ENCODE measurements at regions of chr2 and their contacts with region 1.

Region 1: DNA sequence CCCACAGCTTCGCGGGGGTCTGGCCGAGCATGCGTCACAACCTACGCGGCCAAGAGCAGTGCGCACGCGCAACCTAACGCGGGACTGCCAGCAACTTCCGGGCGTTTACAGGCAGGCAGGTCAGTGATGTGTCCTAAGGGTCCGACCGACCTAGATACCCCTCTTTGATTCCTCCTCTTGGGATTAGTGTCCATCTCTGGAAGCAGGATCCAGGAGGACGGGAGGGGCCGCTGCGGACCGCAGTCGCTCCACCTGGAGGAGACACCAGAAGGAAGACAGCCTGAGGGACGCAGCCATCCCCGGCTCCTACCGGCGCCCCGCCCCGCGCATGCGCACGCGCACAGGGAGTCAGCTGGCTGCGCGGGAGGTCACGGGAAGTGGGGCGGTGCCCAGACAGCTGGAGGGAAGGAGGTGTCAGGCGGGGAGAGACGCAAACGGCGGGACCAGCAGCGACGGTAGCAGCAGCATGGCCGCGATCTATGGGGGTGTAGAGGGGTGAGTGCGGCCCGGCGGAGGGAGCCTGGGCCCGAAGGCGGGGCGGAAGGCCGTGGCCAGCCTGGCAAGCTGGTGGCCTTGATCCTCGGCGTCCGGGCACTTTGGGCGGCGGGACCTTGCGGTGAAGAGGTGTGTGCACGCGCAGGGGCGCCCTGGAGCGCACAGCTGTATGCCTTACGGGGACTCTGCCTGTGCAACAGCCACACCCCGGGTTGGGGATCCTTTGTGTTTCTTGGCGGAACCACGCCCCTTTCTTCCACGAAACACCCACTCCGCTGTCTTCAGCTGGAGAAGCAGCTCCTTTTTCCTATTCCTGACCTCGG is at the start of gene NAGK:
- DNase-seq: peak; percentile 92 to 99 (median 95)
- H3K4me3 ChIP-seq: peak within 1 kb of the TSS; percentile 55 to 100 (median 98)
- H3K27ac ChIP-seq: peak within 1 kb of the TSS; percentile 82 to 100 (median 98)
- H3K27me3 ChIP-seq: no peaks in the 10 kb centered on the region
- CTCF ChIP-seq: peak in 27 of 56 donors; percentile 3 to 54 (median 18)
- total RNA-seq, gene NAGK: 70.6 to 123 (median 96.5) TPM

Region 2: GRCh38 chr2:71130113-71130904 is 61.9 kb after region 1 on chr2 and contains the starts of genes MCEE and MPHOSPH10:
- intact Hi-C with region 1: loop called (anchors 1 kb)
- DNase-seq: peak; percentile 83 to 94 (median 90)
- H3K4me3 ChIP-seq: peak within 1 kb of the TSS; percentile 59 to 99 (median 93)
- H3K27ac ChIP-seq: peak within 1 kb of the TSS; percentile 57 to 98 (median 92)
- H3K27me3 ChIP-seq: no peaks in the 10 kb centered on the region
- CTCF ChIP-seq: peak in 24 of 56 donors; percentile 6 to 51 (median 18)
- total RNA-seq, gene MCEE: 6.9 to 20.7 (median 12.9) TPM
- total RNA-seq, gene MPHOSPH10: 19.7 to 40.3 (median 30.2) TPM